Activated T-helper 2 cell treated with anti-CD3 and anti-CD28 coated beads, Interferon-gamma antibody, Interleukin-2, Interleukin-4, amounts not matched to agents 10 μg/mL and 5 μg/mL and 100 μg/mL, durations not matched to agents 14 hours and 24 hours and 36 hours (primary cell): ENCODE measurements at regions of chr3 and their contacts with region 1.

Region 1: GRCh38 chr3:188202358-188203138 is 48.6 kb downstream of the LPP start:
- DNase-seq: peak; percentile 18
- H3K4me3 Mint-ChIP-seq: no peak overlapping the region
- H3K27ac Mint-ChIP-seq: no peak overlapping the region
- H3K4me1 Mint-ChIP-seq: peaks cover 5% of the 10 kb centered on the region
- H3K27me3 Mint-ChIP-seq: no peaks in the 10 kb centered on the region

Region 2: GRCh38 chr3:187811585-187812250 is 390.8 kb before region 1 on chr3:
- intact Hi-C with region 1: no loop called
- DNase-seq: no peak
- H3K4me3 Mint-ChIP-seq: no peak overlapping the region
- H3K27ac Mint-ChIP-seq: no peak overlapping the region
- H3K4me1 Mint-ChIP-seq: peaks cover 24% of the 10 kb centered on the region
- H3K27me3 Mint-ChIP-seq: no peaks in the 10 kb centered on the region

Region 3: GRCh38 chr3:188164248-188164687 is 38.3 kb before region 1 on chr3:
- intact Hi-C with region 1: loop called (anchors 5 kb)
- DNase-seq: no peak
- H3K4me3 Mint-ChIP-seq: no peak overlapping the region
- H3K27ac Mint-ChIP-seq: peak overlapping the region; percentile 54
- H3K4me1 Mint-ChIP-seq: peaks cover 47% of the 10 kb centered on the region
- H3K27me3 Mint-ChIP-seq: no peaks in the 10 kb centered on the region